ENCODE measurements at regions of chr11 and their contacts with region 1.

Region 1: GRCh38 chr11:75867775-75868374 is 52.9 kb downstream of the UVRAG start:
- DNase-seq: peak in 1 of 2 donors; percentile 16
- ATAC-seq: peak; percentile 76 to 81
- H3K4me3 ChIP-seq: no peak overlapping the region
- H3K27ac ChIP-seq: no peak overlapping the region
- H3K4me1 ChIP-seq: peaks cover 14 to 15% of the 10 kb centered on the region in 2 donors
- H3K27me3 ChIP-seq: no peaks in the 10 kb centered on the region
- CTCF ChIP-seq: peak; percentile 65 to 86 (median 80)
- POLR2A ChIP-seq: no peak

Region 2: DNA sequence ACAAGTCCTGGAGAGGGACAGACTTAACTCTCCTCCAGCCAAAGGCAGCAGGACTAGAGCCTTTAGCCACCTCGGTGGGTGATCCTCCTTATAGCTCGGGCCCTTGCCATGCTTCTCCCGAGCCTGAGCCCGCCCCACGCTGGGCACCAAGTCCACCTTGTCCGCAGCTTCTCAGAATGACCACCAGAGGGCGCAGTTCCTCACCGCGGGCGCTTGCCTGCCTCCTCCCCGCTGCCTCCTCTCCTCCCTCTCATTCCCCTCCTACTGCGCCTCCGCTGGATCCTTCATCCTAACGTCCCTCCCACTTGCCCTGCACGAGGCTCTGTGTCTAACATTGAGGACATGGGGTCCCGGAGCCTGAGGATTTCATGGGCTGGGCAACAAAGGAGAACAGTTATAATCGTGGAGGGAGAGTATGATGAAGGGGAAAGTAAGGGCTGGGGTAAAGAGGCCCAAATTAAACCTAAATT is 161.6 kb before region 1 on chr11:
- in situ Hi-C with region 1: no loop called
- intact Hi-C with region 1: loop called (anchors 5 kb)
- DNase-seq: peak; percentile 37 to 47
- ATAC-seq: peak; percentile 79 to 82
- H3K4me3 ChIP-seq: no peak overlapping the region
- H3K27ac ChIP-seq: no peak overlapping the region
- H3K4me1 ChIP-seq: no peaks in the 10 kb centered on the region
- H3K27me3 ChIP-seq: no peaks in the 10 kb centered on the region
- CTCF ChIP-seq: peak; percentile 62 to 93 (median 85)
- POLR2A ChIP-seq: no peak

Region 3: GRCh38 chr11:75721855-75722668 is 145.8 kb before region 1 on chr11:
- in situ Hi-C with region 1: loop called in 1 of 4 experiments (anchors 10 kb)
- intact Hi-C with region 1: no loop called
- DNase-seq: no peak
- ATAC-seq: no peak
- H3K4me3 ChIP-seq: no peak overlapping the region
- H3K27ac ChIP-seq: no peak overlapping the region
- H3K4me1 ChIP-seq: peaks cover 0 to 4% of the 10 kb centered on the region in 2 donors
- H3K27me3 ChIP-seq: no peaks in the 10 kb centered on the region
- CTCF ChIP-seq: no peak
- POLR2A ChIP-seq: no peak

Region 4: GRCh38 chr11:75802913-75803820 is 64.7 kb before region 1 on chr11:
- in situ Hi-C with region 1: loop called (anchors 5 to 10 kb)
- intact Hi-C with region 1: loop called (anchors 1 kb)
- DNase-seq: peak; percentile 52 to 66
- ATAC-seq: peak; percentile 91 to 95
- H3K4me3 ChIP-seq: no peak overlapping the region
- H3K27ac ChIP-seq: no peak overlapping the region
- H3K4me1 ChIP-seq: no peaks in the 10 kb centered on the region
- H3K27me3 ChIP-seq: no peaks in the 10 kb centered on the region
- CTCF ChIP-seq: peak; percentile 76 to 93 (median 89)
- POLR2A ChIP-seq: no peak

Region 5: GRCh38 chr11:75969670-75970307 is 101.9 kb after region 1 on chr11:
- in situ Hi-C with region 1: no loop called
- intact Hi-C with region 1: no loop called
- DNase-seq: no peak
- ATAC-seq: no peak
- H3K4me3 ChIP-seq: no peak overlapping the region
- H3K27ac ChIP-seq: no peak overlapping the region
- H3K4me1 ChIP-seq: peaks cover 8 to 15% of the 10 kb centered on the region in 2 donors
- H3K27me3 ChIP-seq: no peaks in the 10 kb centered on the region
- CTCF ChIP-seq: no peak
- POLR2A ChIP-seq: no peak